Activated naive CD4-positive, alpha-beta T cell treated with anti-CD3 and anti-CD28 coated beads for 36 hours (primary cell): ENCODE measurements at regions of chr4 and their contacts with region 1.

Region 1: DNA sequence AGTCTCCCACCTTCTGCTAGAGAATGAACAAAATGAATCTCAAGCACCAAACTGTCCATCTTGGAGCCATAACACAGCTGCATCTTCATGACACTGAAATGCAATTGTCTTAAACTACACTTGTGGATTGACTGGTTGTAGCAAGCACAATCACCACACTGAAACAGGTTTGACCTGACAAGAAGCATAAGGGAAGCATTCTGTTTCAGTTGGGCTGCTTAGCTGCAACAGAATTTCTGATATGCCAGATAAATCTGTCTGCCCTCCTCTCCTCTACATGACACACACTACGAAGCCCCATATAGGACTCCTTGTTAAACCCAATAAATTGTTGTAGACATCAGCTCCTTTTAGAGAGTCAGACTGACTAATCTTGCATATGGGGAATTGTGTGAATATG is 101.8 kb upstream of the NPY2R start:
- DNase-seq: no peak
- H3K4me3 Mint-ChIP-seq: no peak overlapping the region
- H3K27ac Mint-ChIP-seq: no peak overlapping the region
- H3K4me1 Mint-ChIP-seq: no peaks in the 10 kb centered on the region
- H3K27me3 Mint-ChIP-seq: peaks cover 12% of the 10 kb centered on the region

Region 2: DNA sequence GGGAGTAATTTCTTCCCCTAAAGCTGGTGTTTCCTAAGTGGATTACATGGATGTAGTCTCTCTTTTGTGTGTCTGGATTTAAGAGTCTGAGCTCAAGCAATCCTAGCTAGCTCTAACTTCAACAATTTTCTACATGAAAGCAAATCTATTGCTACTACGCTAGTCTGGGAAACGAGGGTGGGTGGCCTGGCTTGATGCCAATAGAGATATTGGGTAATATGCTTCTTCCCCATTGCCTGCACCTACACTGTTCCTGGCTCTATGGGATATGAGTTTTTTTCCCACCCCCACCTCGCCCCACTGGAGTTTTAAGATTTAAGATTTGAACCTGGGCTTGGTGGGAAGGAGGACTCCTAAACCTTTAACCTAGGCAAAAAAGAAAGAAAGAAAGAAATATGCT is 166.8 kb before region 1 on chr4:
- CTCF ChIA-PET with region 1: no interaction called
- intact Hi-C with region 1: loop called (anchors 5 kb)
- DNase-seq: no peak
- H3K4me3 Mint-ChIP-seq: no peak overlapping the region
- H3K27ac Mint-ChIP-seq: no peak overlapping the region
- H3K4me1 Mint-ChIP-seq: no peaks in the 10 kb centered on the region
- H3K27me3 Mint-ChIP-seq: peaks cover 5% of the 10 kb centered on the region

Region 3: DNA sequence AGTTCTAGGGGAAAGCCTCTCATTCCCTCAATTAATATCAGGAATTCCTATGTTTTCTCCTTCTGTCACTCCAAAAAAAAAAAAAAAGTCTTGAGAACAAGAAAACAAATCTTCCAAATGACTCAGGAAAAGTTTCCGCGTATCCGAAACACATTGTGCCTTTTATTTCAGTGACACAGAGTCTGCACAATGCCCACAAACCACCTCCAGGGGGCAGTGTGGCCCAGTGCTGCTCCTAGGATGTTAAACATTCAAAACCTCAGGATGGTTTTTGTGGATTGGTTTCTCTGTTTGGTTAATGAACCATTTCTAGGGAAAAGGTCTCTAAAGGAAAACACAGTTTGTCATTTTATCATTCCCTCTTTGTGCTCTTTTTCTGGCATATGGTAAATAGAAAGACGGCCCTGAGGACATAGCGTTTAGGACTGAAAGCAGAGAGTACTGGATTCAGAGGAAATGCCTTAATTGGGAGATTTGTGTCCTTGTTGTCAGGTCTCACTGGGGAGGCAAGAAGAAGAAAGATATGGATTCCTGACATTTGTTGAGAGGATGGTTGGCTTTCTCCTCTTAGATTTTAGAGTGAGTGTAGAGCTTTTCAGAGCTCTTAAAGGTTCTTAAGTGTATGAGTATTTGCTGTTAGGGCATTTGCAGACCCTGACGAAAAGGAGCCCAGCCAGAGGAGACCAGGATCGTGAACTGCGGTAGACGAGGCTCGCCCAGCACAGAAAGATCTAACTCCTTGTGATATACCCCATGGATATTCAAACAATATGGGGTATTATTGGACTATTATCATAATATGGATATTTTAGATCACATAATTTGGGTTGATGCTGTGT is 335.9 kb after region 1 on chr4:
- CTCF ChIA-PET with region 1: no interaction called
- intact Hi-C with region 1: no loop called
- DNase-seq: peak; percentile 76
- H3K4me3 Mint-ChIP-seq: no peak overlapping the region
- H3K27ac Mint-ChIP-seq: no peak overlapping the region
- H3K4me1 Mint-ChIP-seq: no peaks in the 10 kb centered on the region
- H3K27me3 Mint-ChIP-seq: peaks cover 22% of the 10 kb centered on the region